PC-3 (cell line): ENCODE measurements at regions of chr20 and their contacts with region 1.

Region 1: GRCh38 chr20:41232973-41233926 is 84.3 kb downstream of the ZHX3 start:
- DNase-seq: peak; percentile 79
- ATAC-seq: peak; percentile 72
- H3K4me3 ChIP-seq: no peak overlapping the region; the same call in 1 of the 2 replicates
- H3K27ac ChIP-seq: peak overlapping the region; percentile 10; the same call in 1 of the 2 replicates
- H3K4me1 ChIP-seq: peaks cover 32% of the 10 kb centered on the region
- H3K27me3 ChIP-seq: no peaks in the 10 kb centered on the region
- CTCF ChIP-seq: no peak

Region 2: DNA sequence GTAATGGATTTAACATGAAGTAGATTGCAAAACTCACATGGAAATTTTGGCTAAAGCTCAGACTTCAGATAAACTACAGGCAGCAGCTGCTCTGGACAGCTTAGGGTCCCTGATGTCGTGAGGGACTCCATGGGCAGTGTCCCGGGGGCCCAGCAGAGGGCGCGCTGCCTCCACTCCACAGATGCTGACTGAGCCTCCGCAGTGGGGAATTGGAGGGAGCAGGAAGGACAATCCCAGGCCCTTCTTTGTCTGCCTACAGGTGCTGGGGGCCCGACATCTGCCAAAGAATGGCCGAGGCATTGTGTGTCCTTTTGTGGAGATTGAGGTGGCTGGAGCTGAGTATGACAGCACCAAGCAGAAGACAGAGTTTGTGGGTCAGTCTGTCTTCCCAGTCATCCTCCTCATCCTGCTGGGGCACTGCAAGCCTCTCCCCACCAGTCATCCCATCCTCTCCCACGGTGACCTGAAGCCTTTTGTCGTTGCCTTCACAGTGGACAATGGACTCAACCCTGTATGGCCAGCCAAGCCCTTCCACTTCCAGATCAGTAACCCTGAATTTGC is 60.0 kb before region 1 on chr20:
- CTCF ChIA-PET with region 1: interaction called, 5 read pairs
- POLR2A ChIA-PET with region 1: no interaction called
- intact Hi-C with region 1: loop called (anchors 1 kb)
- DNase-seq: peak; percentile 78
- ATAC-seq: peak; percentile 72
- H3K4me3 ChIP-seq: no peak overlapping the region
- H3K27ac ChIP-seq: no peak overlapping the region
- H3K4me1 ChIP-seq: peaks cover 21% of the 10 kb centered on the region
- H3K27me3 ChIP-seq: no peaks in the 10 kb centered on the region
- CTCF ChIP-seq: peak; percentile 97

Region 3: DNA sequence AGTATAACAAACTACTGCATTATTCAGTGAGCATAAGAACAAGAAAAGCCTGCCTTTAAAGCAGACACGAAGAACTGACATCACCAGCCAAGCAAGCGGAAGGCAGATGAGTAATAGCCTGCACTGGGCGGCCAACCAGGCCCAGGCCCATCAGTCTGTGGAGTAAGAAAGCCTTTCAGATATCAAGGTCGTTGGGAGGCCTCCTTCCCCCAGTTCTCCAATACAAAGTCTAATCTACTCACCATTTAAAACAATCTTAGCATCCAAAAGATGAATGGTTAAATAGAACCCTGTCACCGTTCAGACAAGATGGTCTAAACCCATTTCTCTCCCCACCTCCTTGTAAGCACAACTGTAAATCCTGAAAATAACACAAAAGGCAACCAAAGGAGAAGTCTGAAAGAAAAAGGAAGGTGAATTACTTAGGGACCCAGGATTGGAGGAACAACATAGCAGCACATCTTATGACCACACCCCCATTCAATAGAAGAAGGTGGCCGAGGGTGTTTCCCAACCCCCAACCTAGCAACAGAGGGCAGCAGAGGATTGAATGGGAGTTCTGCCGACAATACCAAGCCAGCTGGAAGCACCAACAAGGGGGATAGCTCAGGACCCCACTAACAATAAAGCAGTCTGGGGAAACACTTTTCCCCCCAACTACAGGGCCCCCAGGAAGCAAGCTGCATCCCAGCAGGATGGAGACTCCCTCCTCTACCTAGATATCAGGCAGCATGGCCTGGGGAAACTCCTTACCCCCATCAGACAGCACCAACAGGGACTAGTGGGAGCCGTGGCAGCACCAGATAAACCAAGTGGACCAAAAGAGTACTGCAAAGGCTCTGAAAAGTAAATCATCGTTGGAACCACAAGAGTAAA is 16.4 kb after region 1 on chr20:
- CTCF ChIA-PET with region 1: no interaction called
- POLR2A ChIA-PET with region 1: no interaction called
- intact Hi-C with region 1: loop called (anchors 1 kb)
- DNase-seq: peak; percentile 83
- ATAC-seq: peak; percentile 90
- H3K4me3 ChIP-seq: peak overlapping the region; percentile 26; the same call in 1 of the 2 replicates
- H3K27ac ChIP-seq: peak overlapping the region; percentile 81
- H3K4me1 ChIP-seq: peaks cover 23% of the 10 kb centered on the region
- H3K27me3 ChIP-seq: no peaks in the 10 kb centered on the region
- CTCF ChIP-seq: peak; percentile 64